Activated naive CD8-positive, alpha-beta T cell treated with anti-CD3 and anti-CD28 coated beads, Interleukin-2, amount 10 ng/mL, durations not matched to agents 7 days and 5 days (primary cell): ENCODE measurements at regions of chr22 and their contacts with region 1.

Region 1: GRCh38 chr22:30262917-30263741 is 3.5 kb downstream of the OSM start:
- DNase-seq: peak; percentile 83
- ATAC-seq: no peak
- H3K4me3 Mint-ChIP-seq: peak overlapping the region; percentile 88
- H3K27ac Mint-ChIP-seq: peak overlapping the region; percentile 97
- H3K4me1 Mint-ChIP-seq: peaks cover 51% of the 10 kb centered on the region
- H3K27me3 Mint-ChIP-seq: no peaks in the 10 kb centered on the region

Region 2: DNA sequence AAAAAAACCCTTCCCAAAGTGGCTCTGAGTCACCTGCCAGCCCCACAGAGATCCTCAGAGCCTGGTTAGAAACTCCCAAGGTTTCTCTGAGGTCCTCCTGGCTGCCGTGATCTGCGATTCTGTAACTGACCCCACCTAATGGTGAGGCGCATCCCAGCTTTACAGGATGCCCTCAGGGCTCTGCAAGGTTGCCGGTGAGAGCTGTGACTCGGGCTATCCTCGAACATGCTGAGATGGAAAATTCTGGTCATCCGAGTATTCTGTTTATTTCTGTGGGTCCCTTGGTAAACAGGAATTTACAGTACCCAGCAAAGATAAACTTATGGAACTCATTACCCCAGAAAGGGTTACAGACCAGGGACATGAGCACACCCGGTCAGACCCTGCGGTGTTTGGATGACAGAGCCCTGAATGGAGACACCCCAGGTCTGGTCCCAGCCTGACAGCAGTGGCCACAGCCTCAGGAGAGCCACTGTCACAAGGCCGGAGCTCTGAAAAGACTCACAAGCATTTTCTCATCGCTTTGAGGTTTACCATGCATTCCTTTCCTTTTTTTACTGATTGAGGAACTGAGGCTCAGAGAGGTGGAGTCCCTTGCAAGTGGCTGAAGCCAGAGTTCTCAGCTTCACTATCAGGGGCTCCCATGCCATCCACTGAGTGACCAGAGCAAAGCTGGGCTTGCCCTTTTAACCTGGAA is 38.8 kb before region 1 on chr22:
- POLR2A ChIA-PET with region 1: interaction called, 10 read pairs
- DNase-seq: no peak
- ATAC-seq: no peak
- H3K4me3 Mint-ChIP-seq: peak overlapping the region; percentile 23
- H3K27ac Mint-ChIP-seq: peak overlapping the region; percentile 97
- H3K4me1 Mint-ChIP-seq: peaks cover 91% of the 10 kb centered on the region
- H3K27me3 Mint-ChIP-seq: no peaks in the 10 kb centered on the region

Region 3: DNA sequence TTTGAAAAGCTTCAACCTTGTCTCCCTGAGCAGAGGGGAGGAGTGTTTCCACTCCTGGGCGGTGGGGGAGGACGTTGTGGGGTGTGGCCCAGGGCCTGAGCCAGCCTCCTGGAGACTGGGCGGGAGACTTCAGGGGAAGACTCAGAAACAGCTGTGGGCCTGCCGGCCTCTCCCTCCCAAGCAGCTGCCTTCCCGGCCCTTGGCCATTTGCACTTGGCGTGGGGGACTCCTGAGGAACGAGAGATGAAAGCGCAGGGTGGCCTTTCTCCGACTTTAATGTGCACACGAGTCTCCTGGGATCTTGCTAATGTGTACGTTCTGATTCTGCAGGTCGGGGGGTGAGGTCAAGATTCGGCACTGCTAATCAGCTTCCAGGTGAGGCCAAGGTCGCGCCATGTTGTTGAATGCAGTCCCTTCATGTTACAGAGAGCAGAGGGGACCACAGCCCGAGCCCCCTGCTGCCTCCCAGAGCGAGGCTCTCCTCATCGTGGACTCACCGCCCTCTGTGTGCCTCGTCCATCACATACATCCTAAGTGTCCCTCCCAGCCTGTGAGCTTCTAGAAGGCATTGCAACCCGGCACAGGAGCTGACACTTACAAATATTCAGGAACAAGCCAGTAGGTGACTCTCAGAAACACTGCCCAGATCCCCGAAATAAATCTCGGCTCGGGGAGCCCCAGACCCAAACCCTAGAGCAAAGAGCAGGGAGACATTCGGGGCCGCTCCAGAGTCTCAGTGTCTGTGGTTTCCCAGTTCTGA is 24.3 kb before region 1 on chr22:
- POLR2A ChIA-PET with region 1: interaction called, 91 read pairs
- DNase-seq: peak; percentile 67
- ATAC-seq: peak; percentile 38
- H3K4me3 Mint-ChIP-seq: peak overlapping the region; percentile 34
- H3K27ac Mint-ChIP-seq: peak overlapping the region; percentile 81
- H3K4me1 Mint-ChIP-seq: peaks cover 69% of the 10 kb centered on the region
- H3K27me3 Mint-ChIP-seq: no peaks in the 10 kb centered on the region

Region 4: DNA sequence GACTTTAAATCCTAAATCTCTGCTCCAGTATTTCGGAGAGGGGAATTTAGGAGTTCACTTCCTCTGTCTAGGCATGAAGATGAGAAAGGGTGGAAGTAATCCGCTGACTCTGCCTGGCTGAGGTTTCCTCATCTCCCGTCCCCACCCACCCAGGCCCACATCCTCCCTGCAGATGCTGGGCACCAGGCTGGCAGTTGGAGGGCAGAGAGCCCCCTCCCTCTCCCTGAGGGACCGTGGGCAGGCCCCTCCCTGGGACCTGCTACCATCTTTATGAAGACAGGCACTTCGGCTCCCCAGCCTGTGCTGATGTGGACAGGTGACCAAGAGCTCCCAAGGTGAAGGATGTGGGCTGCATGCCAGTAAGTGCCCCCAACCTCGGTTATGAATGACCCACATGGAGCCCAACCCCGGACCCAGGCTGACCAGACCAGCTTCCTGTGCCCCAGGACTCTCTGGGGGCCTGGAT is 19.5 kb after region 1 on chr22:
- POLR2A ChIA-PET with region 1: interaction called, 14 read pairs
- DNase-seq: peak; percentile 31
- ATAC-seq: peak; percentile 17
- H3K4me3 Mint-ChIP-seq: peak overlapping the region; percentile 66
- H3K27ac Mint-ChIP-seq: peak overlapping the region; percentile 81
- H3K4me1 Mint-ChIP-seq: peaks cover 44% of the 10 kb centered on the region
- H3K27me3 Mint-ChIP-seq: no peaks in the 10 kb centered on the region